Caco-2 (cell line): ENCODE measurements at regions of chr7 and their contacts with region 1.

Region 1: GRCh38 chr7:5854738-5855137 is 25.9 kb upstream of the OCM start:
- DNase-seq: no peak
- H3K4me3 ChIP-seq: no peak overlapping the region
- H3K4me3 Mint-ChIP-seq: no peak overlapping the region
- H3K27ac Mint-ChIP-seq: no peak overlapping the region
- H3K4me1 ChIP-seq: no peaks in the 10 kb centered on the region
- H3K4me1 Mint-ChIP-seq: no peaks in the 10 kb centered on the region
- H3K27me3 ChIP-seq: no peaks in the 10 kb centered on the region
- H3K27me3 Mint-ChIP-seq: no peaks in the 10 kb centered on the region
- CTCF ChIP-seq: no peak

Region 2: DNA sequence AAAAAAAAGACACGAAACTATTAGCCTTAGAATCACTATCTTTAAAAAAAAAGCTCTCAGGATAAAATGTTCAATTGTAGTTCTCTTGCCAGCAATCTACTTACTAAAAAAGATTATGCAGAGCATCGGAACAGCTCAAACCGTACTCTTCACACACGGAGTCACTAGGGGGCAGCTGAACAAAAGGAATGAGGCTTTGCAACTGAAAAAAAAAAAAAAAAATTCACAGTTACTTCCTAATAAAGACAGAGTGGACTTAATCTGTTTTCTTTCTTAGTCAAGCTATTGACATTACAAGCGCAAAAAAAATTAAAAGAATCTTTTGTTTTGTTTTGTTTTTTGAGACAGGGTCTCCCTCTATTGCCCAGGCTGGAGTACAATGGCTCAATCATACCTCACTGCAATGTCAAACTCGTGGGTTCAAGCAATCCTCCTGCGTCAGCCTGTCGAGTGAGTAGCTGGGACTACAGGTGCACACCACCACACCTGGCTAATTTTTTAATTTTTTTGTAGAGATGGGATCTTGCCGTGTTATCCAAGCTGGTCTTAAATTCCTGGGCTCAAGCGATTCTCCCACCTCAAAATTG is 142.6 kb after region 1 on chr7:
- CTCF ChIA-PET with region 1: interaction called, 3 read pairs
- POLR2A ChIA-PET with region 1: interaction called, 4 read pairs
- intact Hi-C with region 1: loop called (anchors 10 kb)
- DNase-seq: peak; percentile 63 to 71
- H3K4me3 ChIP-seq: no peak overlapping the region
- H3K4me3 Mint-ChIP-seq: no peak overlapping the region
- H3K27ac Mint-ChIP-seq: no peak overlapping the region
- H3K4me1 ChIP-seq: peaks cover 15% of the 10 kb centered on the region
- H3K4me1 Mint-ChIP-seq: peaks cover 10% of the 10 kb centered on the region
- H3K27me3 ChIP-seq: no peaks in the 10 kb centered on the region
- H3K27me3 Mint-ChIP-seq: no peaks in the 10 kb centered on the region
- CTCF ChIP-seq: peak; percentile 60 to 79

Region 3: DNA sequence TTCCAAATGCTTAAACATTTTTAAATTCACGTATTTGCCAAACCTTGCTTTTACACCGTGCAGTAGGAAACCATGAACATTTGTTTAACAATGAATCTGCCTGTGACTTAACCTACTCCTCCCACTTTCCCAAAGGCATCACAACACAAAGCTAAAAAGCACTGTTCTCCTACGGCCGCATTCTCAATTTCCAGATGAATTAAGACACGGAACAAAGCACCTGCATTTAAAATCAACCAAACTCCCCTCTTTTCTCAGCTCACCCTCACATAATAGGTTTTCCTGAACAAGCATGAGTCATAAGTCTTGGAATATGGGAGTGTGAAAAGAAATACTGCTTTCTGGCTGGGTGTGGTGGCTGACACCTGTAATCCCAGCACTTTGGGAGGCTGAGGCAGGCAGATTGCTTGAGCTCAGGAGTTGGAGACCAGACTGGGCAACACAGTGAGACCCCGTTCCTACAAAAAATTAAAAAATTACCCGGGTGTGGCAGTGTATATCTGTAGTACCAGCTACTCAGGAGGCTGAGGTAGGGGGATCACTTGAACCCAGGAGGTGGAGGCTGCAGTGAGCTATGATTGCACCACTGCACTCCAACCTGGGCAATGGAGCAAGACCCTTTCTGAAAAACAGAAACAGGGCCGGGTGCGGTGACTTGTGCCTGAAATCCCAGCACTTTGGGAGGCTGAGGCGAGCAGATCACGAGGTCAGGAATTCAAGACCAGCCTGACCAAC is 469.4 kb after region 1 on chr7:
- CTCF ChIA-PET with region 1: interaction called, 3 read pairs
- POLR2A ChIA-PET with region 1: no interaction called
- intact Hi-C with region 1: loop called (anchors 1 kb)
- DNase-seq: no peak
- H3K4me3 ChIP-seq: no peak overlapping the region
- H3K4me3 Mint-ChIP-seq: no peak overlapping the region
- H3K27ac Mint-ChIP-seq: no peak overlapping the region
- H3K4me1 ChIP-seq: no peaks in the 10 kb centered on the region
- H3K4me1 Mint-ChIP-seq: peaks cover 5% of the 10 kb centered on the region
- H3K27me3 ChIP-seq: no peaks in the 10 kb centered on the region
- H3K27me3 Mint-ChIP-seq: no peaks in the 10 kb centered on the region
- CTCF ChIP-seq: no peak

Region 4: GRCh38 chr7:6435486-6436384 is 581.0 kb after region 1 on chr7:
- CTCF ChIA-PET with region 1: no interaction called
- POLR2A ChIA-PET with region 1: no interaction called
- intact Hi-C with region 1: loop called (anchors 5 kb)
- DNase-seq: peak; percentile 78 to 89
- H3K4me3 ChIP-seq: no peak overlapping the region
- H3K4me3 Mint-ChIP-seq: no peak overlapping the region
- H3K27ac Mint-ChIP-seq: no peak overlapping the region
- H3K4me1 ChIP-seq: no peaks in the 10 kb centered on the region
- H3K4me1 Mint-ChIP-seq: no peaks in the 10 kb centered on the region
- H3K27me3 ChIP-seq: no peaks in the 10 kb centered on the region
- H3K27me3 Mint-ChIP-seq: no peaks in the 10 kb centered on the region
- CTCF ChIP-seq: peak; percentile 96 to 97

Region 5: GRCh38 chr7:6447581-6448199 is 593.0 kb after region 1 on chr7 and contains the start of gene DAGLB:
- CTCF ChIA-PET with region 1: no interaction called
- POLR2A ChIA-PET with region 1: interaction called, 10 read pairs
- intact Hi-C with region 1: no loop called
- DNase-seq: peak; percentile 93 to 96
- H3K4me3 ChIP-seq: peak within 1 kb of the TSS; percentile 97
- H3K4me3 Mint-ChIP-seq: peak within 1 kb of the TSS; percentile 86
- H3K27ac Mint-ChIP-seq: peak within 1 kb of the TSS; percentile 95
- H3K4me1 ChIP-seq: no peaks in the 10 kb centered on the region
- H3K4me1 Mint-ChIP-seq: peaks cover 16% of the 10 kb centered on the region
- H3K27me3 ChIP-seq: no peaks in the 10 kb centered on the region
- H3K27me3 Mint-ChIP-seq: no peaks in the 10 kb centered on the region
- CTCF ChIP-seq: no peak
- total RNA-seq, gene DAGLB: 25.8 and 32.6 TPM in 2 replicates